ENCODE measurements at regions of chr3 and their contacts with region 1.

Region 1: GRCh38 chr3:193693774-193694173 is 100.8 kb downstream of the OPA1 start:
- DNase-seq: no peak
- ATAC-seq: peak; percentile 89
- H3K4me3 Mint-ChIP-seq: peak overlapping the region; percentile 61
- H3K27ac Mint-ChIP-seq: peak overlapping the region; percentile 91
- H3K4me1 Mint-ChIP-seq: peaks cover 24% of the 10 kb centered on the region
- H3K27me3 Mint-ChIP-seq: no peaks in the 10 kb centered on the region
- CTCF ChIP-seq: no peak

Region 2: DNA sequence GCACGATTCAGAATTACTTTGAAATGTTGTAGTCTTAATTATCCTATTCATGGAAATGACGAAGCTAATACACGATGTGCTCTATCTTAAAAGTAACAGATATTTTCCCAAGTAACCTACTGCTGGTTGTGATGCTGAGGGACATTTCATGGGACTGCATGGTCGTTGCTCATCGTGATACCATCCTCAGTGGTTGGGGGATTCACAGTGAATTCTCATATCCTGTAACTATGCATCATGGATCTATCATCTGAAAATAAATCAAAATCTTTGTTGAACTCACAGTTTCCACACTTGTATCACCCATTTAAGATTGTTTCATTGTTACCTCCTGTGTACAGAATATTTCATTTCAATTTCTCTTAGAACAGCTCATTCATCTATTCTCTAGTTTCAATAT is 16.0 kb before region 1 on chr3:
- CTCF ChIA-PET with region 1: no interaction called
- POLR2A ChIA-PET with region 1: no interaction called
- intact Hi-C with region 1: loop called (anchors 2 kb)
- DNase-seq: no peak
- ATAC-seq: no peak
- H3K4me3 Mint-ChIP-seq: no peak overlapping the region
- H3K27ac Mint-ChIP-seq: no peak overlapping the region
- H3K4me1 Mint-ChIP-seq: no peaks in the 10 kb centered on the region
- H3K27me3 Mint-ChIP-seq: no peaks in the 10 kb centered on the region
- CTCF ChIP-seq: no peak

Region 3: DNA sequence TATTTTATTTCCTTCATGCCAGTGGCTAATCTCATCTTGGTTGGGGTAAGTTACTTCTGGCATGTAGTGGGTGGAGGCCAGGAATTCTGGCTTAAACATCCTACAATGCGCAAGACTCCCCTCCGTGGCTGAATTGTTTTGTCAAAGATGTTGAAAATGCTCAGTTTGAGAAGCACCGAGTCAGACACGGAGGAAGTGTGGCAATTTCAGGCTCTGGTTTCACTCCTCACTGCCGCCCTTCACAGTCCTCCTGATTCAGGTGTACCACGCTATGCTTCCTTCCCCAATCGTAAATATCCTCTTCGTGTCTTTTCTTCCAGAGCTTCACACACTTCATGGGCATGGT is 49.9 kb after region 1 on chr3:
- CTCF ChIA-PET with region 1: no interaction called
- POLR2A ChIA-PET with region 1: no interaction called
- intact Hi-C with region 1: loop called (anchors 5 kb)
- DNase-seq: no peak
- ATAC-seq: peak; percentile 57
- H3K4me3 Mint-ChIP-seq: peak overlapping the region; percentile 16
- H3K27ac Mint-ChIP-seq: peak overlapping the region; percentile 57
- H3K4me1 Mint-ChIP-seq: peaks cover 20% of the 10 kb centered on the region
- H3K27me3 Mint-ChIP-seq: no peaks in the 10 kb centered on the region
- CTCF ChIP-seq: no peak

Region 4: GRCh38 chr3:193788189-193788991 is 94.6 kb after region 1 on chr3:
- CTCF ChIA-PET with region 1: no interaction called
- POLR2A ChIA-PET with region 1: no interaction called
- intact Hi-C with region 1: no loop called
- DNase-seq: peak; percentile 36
- ATAC-seq: peak; percentile 98
- H3K4me3 Mint-ChIP-seq: no peak overlapping the region
- H3K27ac Mint-ChIP-seq: peak overlapping the region; percentile 15
- H3K4me1 Mint-ChIP-seq: peaks cover 16% of the 10 kb centered on the region
- H3K27me3 Mint-ChIP-seq: peaks cover 25% of the 10 kb centered on the region
- CTCF ChIP-seq: peak; percentile 34

Region 5: GRCh38 chr3:194121891-194122631 is 428.3 kb after region 1 on chr3:
- CTCF ChIA-PET with region 1: no interaction called
- POLR2A ChIA-PET with region 1: no interaction called
- intact Hi-C with region 1: no loop called
- DNase-seq: no peak
- ATAC-seq: no peak
- H3K4me3 Mint-ChIP-seq: no peak overlapping the region
- H3K27ac Mint-ChIP-seq: no peak overlapping the region
- H3K4me1 Mint-ChIP-seq: peaks cover 29% of the 10 kb centered on the region
- H3K27me3 Mint-ChIP-seq: no peaks in the 10 kb centered on the region
- CTCF ChIP-seq: no peak